ENCODE measurements at regions of chr16 and their contacts with region 1.

Region 1: DNA sequence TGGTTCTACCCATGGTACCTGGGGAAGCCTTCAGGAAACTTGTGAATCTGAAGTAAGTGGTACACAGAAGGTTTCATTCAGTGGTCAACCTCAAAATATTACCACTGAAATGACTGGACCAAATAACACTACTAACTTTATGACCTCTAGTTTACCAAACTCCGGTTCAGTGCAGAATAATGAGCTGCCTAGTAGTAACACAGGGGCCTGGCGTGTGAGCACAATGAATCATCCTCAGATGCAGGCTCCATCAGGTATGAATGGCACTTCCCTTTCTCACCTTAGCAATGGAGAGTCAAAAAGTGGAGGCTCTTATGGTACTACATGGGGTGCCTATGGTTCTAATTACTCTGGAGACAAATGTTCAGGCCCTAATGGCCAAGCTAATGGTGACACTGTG is 55.9 kb upstream of the SLC5A11 start:
- DNase-seq: no peak
- H3K4me3 ChIP-seq: no peak overlapping the region
- H3K27ac ChIP-seq: no peak overlapping the region
- H3K4me1 ChIP-seq: peaks cover 4% of the 10 kb centered on the region
- H3K27me3 ChIP-seq: no peaks in the 10 kb centered on the region
- CTCF ChIP-seq: no peak
- POLR2A ChIP-seq: no peak

Region 2: DNA sequence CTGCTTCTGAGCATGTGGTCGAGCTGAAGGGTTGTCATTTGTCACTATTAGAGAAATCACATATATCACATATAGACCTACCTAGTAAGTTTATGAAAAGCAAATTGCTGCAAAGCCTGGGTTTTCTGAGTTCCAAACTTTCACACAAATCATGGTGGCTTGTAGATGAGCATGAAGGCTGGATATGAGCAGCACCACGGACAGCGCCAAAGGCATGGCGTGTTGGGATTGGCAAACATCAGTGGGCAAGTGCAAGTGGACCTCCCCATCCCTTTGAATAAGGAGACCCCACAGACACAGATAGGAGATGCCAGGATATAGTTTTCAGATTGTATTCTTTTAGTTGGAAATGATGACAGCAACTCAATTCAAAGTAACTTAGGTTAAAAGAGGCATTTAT is 611.4 kb before region 1 on chr16:
- intact Hi-C with region 1: no loop called
- DNase-seq: no peak
- H3K4me3 ChIP-seq: no peak overlapping the region
- H3K27ac ChIP-seq: no peak overlapping the region
- H3K4me1 ChIP-seq: no peaks in the 10 kb centered on the region
- H3K27me3 ChIP-seq: no peaks in the 10 kb centered on the region
- CTCF ChIP-seq: no peak
- POLR2A ChIP-seq: no peak

Region 3: DNA sequence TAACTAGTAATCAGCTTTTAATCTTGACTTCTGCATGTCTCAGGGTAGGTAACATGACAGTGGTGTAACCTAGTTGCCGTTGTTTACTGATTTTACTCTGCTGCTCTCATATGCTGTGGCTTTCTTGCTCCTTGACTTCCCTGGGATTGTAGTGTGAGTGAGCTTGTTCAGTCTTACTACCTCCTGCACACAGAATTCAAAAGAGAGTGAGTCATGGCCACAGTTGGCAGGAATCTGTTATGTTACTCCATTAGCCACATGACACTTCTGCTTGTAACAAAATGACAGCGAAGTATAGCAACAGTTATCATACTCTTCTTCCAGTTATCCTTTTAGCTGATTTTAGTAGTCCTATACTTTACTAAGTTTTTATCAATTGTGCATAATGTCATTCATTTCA is 41.6 kb before region 1 on chr16:
- intact Hi-C with region 1: loop called (anchors 10 kb)
- DNase-seq: peak; percentile 10
- H3K4me3 ChIP-seq: no peak overlapping the region
- H3K27ac ChIP-seq: no peak overlapping the region
- H3K4me1 ChIP-seq: no peaks in the 10 kb centered on the region
- H3K27me3 ChIP-seq: no peaks in the 10 kb centered on the region
- CTCF ChIP-seq: no peak
- POLR2A ChIP-seq: no peak

Region 4: GRCh38 chr16:24858219-24859041 is 68.5 kb after region 1 on chr16:
- intact Hi-C with region 1: no loop called
- DNase-seq: no peak
- H3K4me3 ChIP-seq: no peak overlapping the region
- H3K27ac ChIP-seq: no peak overlapping the region
- H3K4me1 ChIP-seq: peaks cover 2% of the 10 kb centered on the region
- H3K27me3 ChIP-seq: no peaks in the 10 kb centered on the region
- CTCF ChIP-seq: no peak
- POLR2A ChIP-seq: no peak

Measured in prostate gland (tissue), 2 donors.